ENCODE measurements at regions of chr2 and their contacts with region 1.

Region 1: DNA sequence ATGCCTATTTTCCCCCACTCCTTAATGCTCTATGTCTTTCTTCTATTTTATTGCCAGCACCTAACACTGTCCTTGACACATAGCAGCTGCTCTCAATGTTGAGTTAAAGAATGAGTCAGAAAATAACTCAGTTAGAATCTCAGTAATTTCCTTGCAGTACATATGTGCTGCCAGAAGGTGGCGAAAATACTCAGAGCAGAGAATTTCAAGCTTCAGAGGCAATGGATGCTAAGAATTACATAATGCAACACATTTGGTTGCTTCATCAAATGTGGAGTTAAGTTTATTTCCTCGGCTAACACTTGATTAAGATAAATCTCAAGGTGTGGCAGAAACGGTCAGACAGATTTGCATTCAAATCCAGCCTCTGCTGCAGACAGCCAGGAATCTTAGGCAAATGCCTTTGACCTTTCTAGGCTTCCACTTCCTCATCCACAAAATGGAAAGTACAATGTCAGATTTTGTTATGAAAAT is 105.6 kb downstream of the VSNL1 start:
- DNase-seq: peak; percentile 84
- H3K4me3 Mint-ChIP-seq: no peak overlapping the region
- H3K27ac Mint-ChIP-seq: no peak overlapping the region
- H3K4me1 Mint-ChIP-seq: peaks cover 31% of the 10 kb centered on the region
- H3K27me3 Mint-ChIP-seq: no peaks in the 10 kb centered on the region
- CTCF ChIP-seq: peak; percentile 73

Region 2: DNA sequence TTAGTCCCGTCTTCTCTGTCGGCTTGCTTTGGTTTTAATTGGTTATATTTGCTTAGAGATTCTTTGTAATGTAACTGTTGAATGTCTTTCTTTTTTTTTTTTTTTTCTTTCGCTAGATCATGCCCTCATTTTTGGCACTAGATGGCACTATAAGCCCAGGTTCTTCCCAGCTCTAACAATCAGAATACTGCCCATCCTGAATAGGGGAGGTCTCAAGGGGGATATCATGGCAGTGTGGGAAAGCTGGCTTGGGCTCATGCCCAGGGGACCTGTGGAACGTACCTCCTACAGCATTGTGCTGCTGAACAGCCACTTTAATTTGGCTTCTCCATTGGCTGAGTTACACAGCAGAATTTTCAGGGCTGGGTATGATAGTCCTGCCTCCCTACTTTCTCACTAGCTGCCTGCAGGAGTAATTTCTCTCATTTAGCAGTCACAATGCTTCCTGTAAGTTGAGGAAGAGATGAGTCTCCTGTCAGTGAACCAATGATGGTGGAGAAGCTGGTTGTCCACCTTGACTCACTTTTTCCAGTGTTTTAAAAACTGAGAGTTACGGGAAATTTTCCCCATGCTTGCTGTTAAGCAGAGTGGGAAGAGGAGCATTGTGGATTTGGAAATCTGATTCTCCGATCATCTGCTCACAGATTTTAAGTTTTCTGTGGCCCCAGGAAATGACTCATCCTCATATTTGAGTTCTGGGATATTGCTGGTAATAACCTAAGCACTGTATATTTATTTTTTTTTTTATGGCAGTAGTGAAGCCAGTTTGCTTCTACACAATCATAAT is 175.1 kb before region 1 on chr2:
- CTCF ChIA-PET with region 1: interaction called, 9 read pairs
- POLR2A ChIA-PET with region 1: no interaction called
- intact Hi-C with region 1: loop called (anchors 10 kb)
- DNase-seq: peak; percentile 76
- H3K4me3 Mint-ChIP-seq: no peak overlapping the region
- H3K27ac Mint-ChIP-seq: no peak overlapping the region
- H3K4me1 Mint-ChIP-seq: peaks cover 8% of the 10 kb centered on the region
- H3K27me3 Mint-ChIP-seq: no peaks in the 10 kb centered on the region
- CTCF ChIP-seq: peak; percentile 53

Region 3: GRCh38 chr2:17529771-17530170 is 116.3 kb before region 1 on chr2:
- CTCF ChIA-PET with region 1: no interaction called
- POLR2A ChIA-PET with region 1: no interaction called
- intact Hi-C with region 1: no loop called
- DNase-seq: no peak
- H3K4me3 Mint-ChIP-seq: no peak overlapping the region
- H3K27ac Mint-ChIP-seq: no peak overlapping the region
- H3K4me1 Mint-ChIP-seq: no peaks in the 10 kb centered on the region
- H3K27me3 Mint-ChIP-seq: no peaks in the 10 kb centered on the region
- CTCF ChIP-seq: no peak

Region 4: GRCh38 chr2:17620280-17620679 is 25.8 kb before region 1 on chr2:
- CTCF ChIA-PET with region 1: interaction called, 6 read pairs
- POLR2A ChIA-PET with region 1: interaction called, 24 read pairs
- intact Hi-C with region 1: no loop called
- DNase-seq: peak; percentile 88
- H3K4me3 Mint-ChIP-seq: peak overlapping the region; percentile 19
- H3K27ac Mint-ChIP-seq: no peak overlapping the region
- H3K4me1 Mint-ChIP-seq: peaks cover 34% of the 10 kb centered on the region
- H3K27me3 Mint-ChIP-seq: no peaks in the 10 kb centered on the region
- CTCF ChIP-seq: no peak

Region 5: DNA sequence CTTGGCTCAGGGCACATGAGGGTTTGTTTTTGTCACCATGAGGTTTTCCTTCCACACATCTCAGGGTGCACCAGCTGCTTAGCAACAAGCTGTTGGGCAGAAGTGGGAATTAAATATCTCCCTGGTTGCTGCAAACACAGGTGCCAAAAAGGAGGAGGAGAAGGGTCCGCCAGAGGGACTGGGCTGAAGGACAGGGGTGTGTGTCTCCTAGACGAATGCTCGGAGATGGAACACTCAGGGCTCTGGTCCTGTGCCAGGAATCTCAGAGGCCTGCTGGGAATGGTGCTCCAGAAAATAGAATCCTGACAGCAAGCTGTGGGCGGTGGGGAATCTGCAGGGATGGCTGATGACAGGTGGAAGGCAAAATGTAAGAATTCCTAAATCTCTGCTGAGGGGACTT is 11.1 kb before region 1 on chr2:
- CTCF ChIA-PET with region 1: interaction called, 21 read pairs
- POLR2A ChIA-PET with region 1: interaction called, 4 read pairs
- intact Hi-C with region 1: no loop called
- DNase-seq: no peak
- H3K4me3 Mint-ChIP-seq: no peak overlapping the region
- H3K27ac Mint-ChIP-seq: no peak overlapping the region
- H3K4me1 Mint-ChIP-seq: no peaks in the 10 kb centered on the region
- H3K27me3 Mint-ChIP-seq: no peaks in the 10 kb centered on the region
- CTCF ChIP-seq: no peak

Region 6: DNA sequence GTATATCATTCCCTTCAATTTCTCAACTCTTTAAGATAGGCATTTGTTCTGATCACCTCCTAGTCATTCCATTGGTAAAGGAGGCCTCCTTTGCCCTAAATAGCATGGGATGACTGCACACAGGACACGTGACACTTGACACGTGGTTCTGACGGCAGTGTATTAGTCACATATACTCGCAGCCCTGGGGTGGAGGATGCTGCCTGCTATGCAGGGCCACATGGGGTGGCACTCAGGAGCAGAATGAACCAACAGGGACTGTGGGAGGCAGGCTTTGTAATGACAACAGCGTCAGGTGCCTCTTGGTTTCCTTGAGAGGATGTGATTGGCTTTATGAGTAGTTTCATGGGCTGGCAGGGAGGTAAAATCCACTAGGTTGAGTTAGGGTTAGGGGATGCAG is 223.0 kb after region 1 on chr2:
- CTCF ChIA-PET with region 1: no interaction called
- POLR2A ChIA-PET with region 1: no interaction called
- intact Hi-C with region 1: no loop called
- DNase-seq: peak; percentile 50
- H3K4me3 Mint-ChIP-seq: no peak overlapping the region
- H3K27ac Mint-ChIP-seq: no peak overlapping the region
- H3K4me1 Mint-ChIP-seq: no peaks in the 10 kb centered on the region
- H3K27me3 Mint-ChIP-seq: no peaks in the 10 kb centered on the region
- CTCF ChIP-seq: no peak